ENCODE measurements at regions of chr10 and their contacts with region 1.

Region 1: DNA sequence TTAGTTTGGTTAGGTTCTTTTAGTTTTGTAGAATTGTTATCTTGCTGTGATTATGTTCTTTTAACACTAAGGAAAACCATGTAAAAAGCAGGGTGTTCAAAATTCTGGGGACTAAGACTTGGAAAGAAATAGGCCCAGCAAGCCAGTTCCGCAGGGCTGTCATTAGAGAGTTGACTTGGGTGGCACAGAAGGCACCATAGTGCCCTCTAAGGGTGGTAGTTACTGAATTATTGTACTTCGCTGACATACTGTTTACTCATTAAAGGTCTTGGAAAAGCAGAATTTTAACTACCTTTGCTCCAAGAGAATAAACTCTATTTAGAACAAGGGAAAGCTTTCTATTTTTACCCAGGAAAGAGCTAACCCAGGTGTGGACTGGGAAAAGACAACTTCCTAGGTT is 86.5 kb downstream of the OTUD1 start:
- DNase-seq: no peak
- ATAC-seq: peak; percentile 57

Region 2: DNA sequence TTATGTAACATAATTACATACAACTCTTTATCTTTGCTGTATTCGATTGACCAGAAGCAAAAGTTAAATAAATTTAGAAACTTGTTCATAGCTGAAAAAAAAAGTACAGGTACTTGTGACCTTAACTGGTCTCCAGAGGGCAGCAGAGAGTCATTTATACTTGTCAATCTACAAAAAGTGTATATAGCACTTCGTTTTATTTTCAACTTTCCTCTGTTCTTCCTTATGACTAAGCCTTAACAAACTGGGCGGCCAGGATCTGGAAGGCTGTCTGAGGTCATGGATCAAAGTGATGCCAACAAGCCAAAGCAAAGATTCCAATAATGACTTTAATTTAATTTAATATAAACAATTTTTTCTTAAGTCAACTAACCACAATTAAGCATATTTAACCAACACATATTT is 210.6 kb before region 1 on chr10:
- intact Hi-C with region 1: loop called (anchors 10 kb)
- DNase-seq: no peak
- ATAC-seq: peak; percentile 51

Region 3: DNA sequence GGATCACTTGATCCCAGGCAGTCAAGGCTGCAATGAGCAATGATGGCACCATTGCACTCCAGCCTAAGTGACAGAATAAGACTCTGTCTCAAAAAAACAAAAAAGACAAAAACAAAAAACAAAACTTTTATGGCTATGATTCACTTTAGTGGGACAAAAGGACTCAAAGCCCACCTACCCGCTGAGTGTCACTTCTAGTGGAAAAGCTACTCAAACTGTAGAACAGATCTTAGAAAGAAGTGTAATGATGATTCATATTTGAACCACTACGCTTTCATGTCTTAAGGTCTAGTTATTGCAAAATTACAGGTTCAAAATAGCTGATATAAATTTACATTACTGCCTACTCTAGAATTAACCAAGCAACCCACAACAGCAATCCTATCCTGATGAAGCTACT is 133.6 kb before region 1 on chr10:
- intact Hi-C with region 1: no loop called
- DNase-seq: no peak
- ATAC-seq: no peak

Measured in sciatic nerve (tissue), 2 donors.